Activated CD4-positive, alpha-beta memory T cell treated with anti-CD3 and anti-CD28 coated beads for 36 hours (primary cell): ENCODE measurements at regions of chrX and their contacts with region 1.

Region 1: DNA sequence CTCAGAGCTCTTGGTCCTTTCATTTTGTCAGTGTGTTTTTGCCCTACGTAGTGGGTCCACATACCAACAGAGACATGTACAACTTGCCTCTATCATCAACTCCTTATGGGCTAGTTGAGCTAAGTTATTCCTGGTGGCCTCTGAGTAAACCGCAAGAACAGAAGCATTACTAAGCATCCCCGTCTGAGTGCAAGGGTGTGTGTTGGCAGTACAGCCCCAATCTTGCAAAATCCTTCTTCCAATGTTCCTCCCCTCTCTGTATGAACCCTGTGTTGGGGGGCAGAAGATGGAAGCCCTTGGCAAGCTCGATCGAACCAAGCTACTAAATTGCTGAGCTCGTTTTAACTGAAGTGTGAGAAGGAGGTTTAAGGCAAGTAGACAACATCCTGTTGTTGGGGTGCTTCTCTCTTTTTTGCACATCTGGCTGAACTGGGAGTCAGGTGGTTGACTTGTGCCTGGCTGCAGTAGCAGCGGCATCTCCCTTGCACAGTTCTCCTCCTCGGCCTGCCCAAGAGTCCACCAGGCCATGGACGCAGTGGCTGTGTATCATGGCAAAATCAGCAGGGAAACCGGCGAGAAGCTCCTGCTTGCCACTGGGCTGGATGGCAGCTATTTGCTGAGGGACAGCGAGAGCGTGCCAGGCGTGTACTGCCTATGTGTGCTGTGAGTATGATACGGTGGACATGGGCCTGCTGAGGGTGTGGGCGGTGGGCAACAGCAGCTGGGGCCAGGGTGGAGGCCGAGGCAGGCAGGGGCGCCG is at the start of gene SH2D1A:
- DNase-seq: peak; percentile 39
- H3K4me3 Mint-ChIP-seq: peak within 1 kb of the TSS; percentile 87
- H3K27ac Mint-ChIP-seq: peak within 1 kb of the TSS; percentile 98
- H3K4me1 Mint-ChIP-seq: peaks cover 42% of the 10 kb centered on the region
- H3K27me3 Mint-ChIP-seq: no peaks in the 10 kb centered on the region
- total RNA-seq, gene SH2D1A: 30.5 to 32.3 TPM

Region 2: GRCh38 chrX:123878252-123878721 is 468.0 kb before region 1 on chrX:
- CTCF ChIA-PET with region 1: no interaction called
- POLR2A ChIA-PET with region 1: no interaction called
- intact Hi-C with region 1: loop called (anchors 5 kb)
- DNase-seq: no peak
- H3K4me3 Mint-ChIP-seq: no peak overlapping the region
- H3K27ac Mint-ChIP-seq: peak overlapping the region; percentile 58
- H3K4me1 Mint-ChIP-seq: peaks cover 22% of the 10 kb centered on the region
- H3K27me3 Mint-ChIP-seq: no peaks in the 10 kb centered on the region

Region 3: GRCh38 chrX:124086411-124086810 is 259.9 kb before region 1 on chrX:
- CTCF ChIA-PET with region 1: no interaction called
- POLR2A ChIA-PET with region 1: no interaction called
- intact Hi-C with region 1: loop called (anchors 10 kb)
- DNase-seq: peak; percentile 56
- H3K4me3 Mint-ChIP-seq: peak overlapping the region; percentile 7
- H3K27ac Mint-ChIP-seq: peak overlapping the region; percentile 74
- H3K4me1 Mint-ChIP-seq: peaks cover 28% of the 10 kb centered on the region
- H3K27me3 Mint-ChIP-seq: no peaks in the 10 kb centered on the region

Region 4: GRCh38 chrX:124113799-124114600 is 232.3 kb before region 1 on chrX:
- CTCF ChIA-PET with region 1: no interaction called
- POLR2A ChIA-PET with region 1: no interaction called
- intact Hi-C with region 1: no loop called
- DNase-seq: no peak
- H3K4me3 Mint-ChIP-seq: no peak overlapping the region
- H3K27ac Mint-ChIP-seq: no peak overlapping the region
- H3K4me1 Mint-ChIP-seq: no peaks in the 10 kb centered on the region
- H3K27me3 Mint-ChIP-seq: no peaks in the 10 kb centered on the region

Region 5: DNA sequence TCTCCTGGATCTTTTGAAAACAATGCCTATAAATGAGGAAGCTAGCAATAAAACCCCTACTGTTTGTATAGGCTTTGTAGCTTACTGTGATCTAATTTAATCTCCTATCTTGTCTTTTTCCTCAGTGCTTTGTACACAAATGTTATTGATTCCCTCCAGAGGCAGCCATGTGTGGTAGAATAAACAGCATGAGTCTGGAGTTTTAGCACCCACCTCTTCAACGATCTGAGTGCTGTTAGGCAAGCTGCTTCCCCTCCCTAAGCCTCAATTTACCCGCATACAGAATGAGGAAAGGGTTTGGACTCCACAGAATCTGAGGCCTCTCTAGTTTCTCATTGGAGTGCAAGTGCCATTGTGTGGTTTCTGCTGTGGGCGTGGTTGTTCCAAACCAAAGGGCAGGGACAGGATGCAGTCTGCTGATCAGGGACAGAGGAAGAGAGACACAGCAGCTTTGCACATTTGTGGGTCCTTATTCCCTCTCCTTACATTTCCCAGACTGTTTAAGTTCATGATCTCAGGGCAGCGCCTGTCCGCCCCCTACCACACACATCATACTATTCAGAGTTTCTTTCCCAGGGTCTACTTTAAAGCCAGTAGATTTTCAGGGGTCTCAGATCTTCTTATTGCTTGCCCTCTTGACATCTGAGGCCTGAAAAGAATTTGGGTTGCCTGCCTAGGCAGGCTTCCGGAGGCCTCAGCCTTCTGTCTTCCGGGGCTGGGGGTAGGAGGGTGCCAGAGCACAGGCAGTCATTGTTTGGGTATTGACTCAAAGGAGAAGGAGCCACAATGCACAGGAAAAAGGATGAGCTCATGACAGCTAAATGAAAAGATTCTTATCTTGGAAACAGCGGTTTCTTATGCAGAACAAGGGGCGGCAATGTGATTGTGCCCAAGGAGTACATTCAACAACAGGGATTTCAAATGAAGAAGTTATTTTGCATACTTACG is 128.7 kb before region 1 on chrX:
- CTCF ChIA-PET with region 1: interaction called, 6 read pairs
- POLR2A ChIA-PET with region 1: interaction called, 55 read pairs
- intact Hi-C with region 1: loop called (anchors 1 kb)
- DNase-seq: peak; percentile 78
- H3K4me3 Mint-ChIP-seq: peak overlapping the region; percentile 54
- H3K27ac Mint-ChIP-seq: peak overlapping the region; percentile 96
- H3K4me1 Mint-ChIP-seq: peaks cover 66% of the 10 kb centered on the region
- H3K27me3 Mint-ChIP-seq: no peaks in the 10 kb centered on the region

Region 6: DNA sequence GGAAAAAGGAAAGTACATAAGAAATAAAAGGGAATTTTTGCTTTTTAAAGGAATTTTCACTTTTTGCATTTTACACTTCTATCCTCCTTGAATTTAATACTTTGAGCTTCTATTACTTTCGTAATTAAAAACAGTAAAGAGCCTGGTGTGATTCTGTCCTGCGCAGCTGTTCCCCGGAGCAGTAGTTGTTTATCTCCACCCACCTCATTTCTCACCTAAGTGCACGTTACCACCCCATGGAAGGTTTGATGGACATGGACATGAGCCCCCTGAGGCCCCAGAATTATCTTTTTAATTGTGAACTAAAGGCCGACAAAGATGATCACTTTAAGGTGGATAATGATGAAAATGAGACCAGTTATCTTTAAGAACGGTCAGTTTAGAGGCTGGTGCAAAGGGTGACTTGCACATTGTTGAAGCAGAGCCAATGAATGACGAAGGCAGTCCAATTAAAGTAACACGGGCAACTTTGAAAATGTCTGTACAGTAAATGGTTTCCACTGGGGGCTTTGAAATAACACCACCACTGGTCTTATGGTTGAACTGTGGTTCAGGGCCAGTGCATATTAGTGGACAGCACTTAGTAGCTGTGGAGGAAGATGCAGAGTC is 65.9 kb before region 1 on chrX:
- CTCF ChIA-PET with region 1: no interaction called
- POLR2A ChIA-PET with region 1: no interaction called
- intact Hi-C with region 1: loop called (anchors 5 kb)
- DNase-seq: no peak
- H3K4me3 Mint-ChIP-seq: peak overlapping the region; percentile 13
- H3K27ac Mint-ChIP-seq: no peak overlapping the region
- H3K4me1 Mint-ChIP-seq: peaks cover 16% of the 10 kb centered on the region
- H3K27me3 Mint-ChIP-seq: no peaks in the 10 kb centered on the region

Region 7: GRCh38 chrX:124328765-124329164 is 17.5 kb before region 1 on chrX:
- CTCF ChIA-PET with region 1: no interaction called
- POLR2A ChIA-PET with region 1: interaction called, 6 read pairs
- intact Hi-C with region 1: loop called (anchors 2 kb)
- DNase-seq: no peak
- H3K4me3 Mint-ChIP-seq: no peak overlapping the region
- H3K27ac Mint-ChIP-seq: no peak overlapping the region
- H3K4me1 Mint-ChIP-seq: peaks cover 20% of the 10 kb centered on the region
- H3K27me3 Mint-ChIP-seq: no peaks in the 10 kb centered on the region

Region 8: GRCh38 chrX:124435616-124436015 is 89.3 kb after region 1 on chrX:
- CTCF ChIA-PET with region 1: no interaction called
- POLR2A ChIA-PET with region 1: no interaction called
- intact Hi-C with region 1: no loop called
- DNase-seq: no peak
- H3K4me3 Mint-ChIP-seq: no peak overlapping the region
- H3K27ac Mint-ChIP-seq: no peak overlapping the region
- H3K4me1 Mint-ChIP-seq: no peaks in the 10 kb centered on the region
- H3K27me3 Mint-ChIP-seq: no peaks in the 10 kb centered on the region

Region 9: GRCh38 chrX:125295337-125295736 is 949.0 kb after region 1 on chrX:
- CTCF ChIA-PET with region 1: no interaction called
- POLR2A ChIA-PET with region 1: no interaction called
- intact Hi-C with region 1: loop called (anchors 5 kb)
- DNase-seq: no peak
- H3K4me3 Mint-ChIP-seq: no peak overlapping the region
- H3K27ac Mint-ChIP-seq: peak overlapping the region; percentile 71
- H3K4me1 Mint-ChIP-seq: peaks cover 22% of the 10 kb centered on the region
- H3K27me3 Mint-ChIP-seq: no peaks in the 10 kb centered on the region